Testis (tissue), 5 donors: ENCODE measurements at regions of chr17 and their contacts with region 1.

Region 1: GRCh38 chr17:35749560-35750412 is 3.3 kb downstream of the GAS2L2 start:
- DNase-seq: no peak
- H3K4me3 ChIP-seq: peak overlapping the region in 1 of 2 donors; percentile 26
- H3K27ac ChIP-seq: no peak overlapping the region
- H3K4me1 ChIP-seq: peaks cover 11% of the 10 kb centered on the region
- H3K27me3 ChIP-seq: no peaks in the 10 kb centered on the region
- CTCF ChIP-seq: no peak
- POLR2A ChIP-seq: no peak

Region 2: DNA sequence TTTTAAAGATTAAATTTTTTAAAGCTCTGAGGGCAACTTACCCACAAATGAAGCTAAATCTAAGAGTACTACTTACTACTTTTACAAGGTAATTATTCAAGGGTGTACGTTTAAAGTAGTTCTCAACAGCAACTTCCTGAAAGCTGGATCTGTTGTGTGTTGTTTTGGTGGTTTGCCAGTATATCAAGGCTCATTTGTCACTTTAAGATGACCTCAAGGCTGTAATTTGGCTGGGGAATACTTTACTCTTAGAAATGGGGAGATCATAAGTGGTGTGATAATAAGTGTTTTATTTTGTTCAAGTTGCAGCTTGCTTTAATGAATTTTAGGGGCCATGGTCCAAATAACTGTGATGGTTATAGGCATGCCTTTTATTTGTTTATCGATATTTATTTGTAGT is 132.3 kb before region 1 on chr17:
- intact Hi-C with region 1: loop called (anchors 5 kb)
- DNase-seq: no peak
- H3K4me3 ChIP-seq: no peak overlapping the region
- H3K27ac ChIP-seq: no peak overlapping the region
- H3K4me1 ChIP-seq: no peaks in the 10 kb centered on the region
- H3K27me3 ChIP-seq: no peaks in the 10 kb centered on the region
- CTCF ChIP-seq: no peak
- POLR2A ChIP-seq: no peak

Region 3: GRCh38 chr17:35808962-35809854 is 59.4 kb after region 1 on chr17 and contains the start of gene TAF15:
- intact Hi-C with region 1: no loop called
- DNase-seq: peak; percentile 98
- H3K4me3 ChIP-seq: peak within 1 kb of the TSS; percentile 90 to 93
- H3K27ac ChIP-seq: peak within 1 kb of the TSS; percentile 95 to 97
- H3K4me1 ChIP-seq: peaks cover 21% of the 10 kb centered on the region
- H3K27me3 ChIP-seq: no peaks in the 10 kb centered on the region
- CTCF ChIP-seq: peak; percentile 54 to 64 (median 60)
- POLR2A ChIP-seq: peak; percentile 68
- total RNA-seq, gene TAF15: 133 to 160 TPM